CD8-positive, alpha-beta memory T cell (primary cell): ENCODE measurements at regions of chr12 and their contacts with region 1.

Region 1: DNA sequence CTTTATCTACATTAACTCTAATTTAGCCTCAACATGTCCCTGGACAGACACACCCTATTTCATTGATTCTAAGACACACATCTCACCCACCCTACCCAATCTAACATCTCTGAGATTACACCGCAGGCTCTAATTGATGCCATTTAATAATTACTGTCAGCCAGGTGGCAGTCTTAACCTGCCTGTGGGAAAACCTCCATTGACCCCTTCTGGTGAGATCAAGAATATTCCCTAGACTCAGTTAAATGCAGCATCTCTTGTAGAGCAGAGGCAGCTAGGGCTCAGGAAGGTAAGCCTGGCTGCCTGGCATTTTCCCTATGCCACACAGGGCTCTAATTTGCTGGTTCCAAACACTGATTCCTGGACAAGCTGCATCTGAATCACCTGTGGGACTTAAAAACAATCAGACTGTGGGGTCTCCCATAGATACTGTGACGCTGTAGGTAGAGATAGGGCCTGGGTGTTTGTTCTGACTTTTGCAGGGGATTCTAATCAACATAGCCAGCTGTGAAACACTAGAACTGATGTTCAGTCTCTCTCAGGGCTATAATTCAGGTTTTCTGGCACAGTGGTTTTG is 14.3 kb downstream of the MCRS1 start:
- DNase-seq: peak in 2 of 5 donors; percentile 31 to 46
- H3K4me3 ChIP-seq: no peak overlapping the region
- H3K4me3 Mint-ChIP-seq: peak overlapping the region in 1 of 7 donors; percentile 4
- H3K27ac ChIP-seq: no peak overlapping the region
- H3K27ac Mint-ChIP-seq: peak overlapping the region in 3 of 8 donors; percentile 20 to 81 (median 71)
- H3K4me1 ChIP-seq: peaks cover 5% of the 10 kb centered on the region
- H3K4me1 Mint-ChIP-seq: peaks cover 4 to 11% (median 6%) of the 10 kb centered on the region in 3 donors
- H3K27me3 ChIP-seq: peaks cover 2% of the 10 kb centered on the region
- H3K27me3 Mint-ChIP-seq: peaks cover 3% of the 10 kb centered on the region in 2 donors

Region 2: GRCh38 chr12:49564686-49565405 is 11.2 kb after region 1 on chr12:
- CTCF ChIA-PET with region 1: interaction called, 12 read pairs
- POLR2A ChIA-PET with region 1: interaction called, 4 read pairs
- DNase-seq: no peak
- H3K4me3 ChIP-seq: no peak overlapping the region
- H3K4me3 Mint-ChIP-seq: peak overlapping the region in 6 of 7 donors; percentile 28 to 99 (median 38)
- H3K27ac ChIP-seq: no peak overlapping the region
- H3K27ac Mint-ChIP-seq: peak overlapping the region in 6 of 8 donors; percentile 17 to 92 (median 46)
- H3K4me1 ChIP-seq: peaks cover 42% of the 10 kb centered on the region
- H3K4me1 Mint-ChIP-seq: peaks cover 49 to 60% (median 53%) of the 10 kb centered on the region in 3 donors
- H3K27me3 ChIP-seq: no peaks in the 10 kb centered on the region
- H3K27me3 Mint-ChIP-seq: no peaks in the 10 kb centered on the region

Region 3: DNA sequence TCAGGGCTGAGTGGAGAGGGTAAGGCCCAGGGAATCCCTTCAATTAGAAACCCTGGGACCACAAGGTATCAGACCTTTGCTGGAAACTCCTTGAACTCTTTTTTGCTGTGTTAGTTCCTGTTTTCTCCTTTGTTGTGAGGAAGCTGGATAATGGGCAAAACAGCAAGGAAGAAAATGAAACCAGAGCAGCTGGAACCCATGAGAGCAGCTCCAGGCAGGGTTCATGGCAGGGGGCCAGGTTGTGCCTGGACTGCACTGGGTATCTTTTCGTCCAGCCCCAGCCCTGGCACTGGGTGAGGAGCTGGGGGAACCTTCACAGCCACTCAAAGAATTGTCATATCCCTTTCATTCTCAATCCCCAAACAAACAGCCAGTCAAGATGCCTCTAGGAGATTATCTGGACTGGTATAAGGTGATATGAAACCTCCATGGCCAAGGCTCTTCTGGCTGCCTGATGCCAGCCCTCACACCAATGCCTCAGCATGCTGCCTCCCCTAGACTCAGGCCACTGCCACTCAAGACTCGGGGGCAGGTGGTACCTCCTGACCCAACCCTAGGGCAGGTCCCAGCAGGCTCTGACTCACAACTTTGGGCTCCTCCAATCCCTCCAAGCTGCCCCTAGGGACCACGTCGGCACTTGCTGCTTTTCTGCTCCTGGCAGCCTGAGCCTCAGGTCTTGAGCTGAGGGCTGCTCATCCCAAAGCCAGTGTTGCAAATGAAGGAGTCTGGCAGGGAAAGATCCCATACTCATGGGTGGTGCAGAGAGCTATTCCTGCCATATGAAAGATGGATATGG is 35.3 kb after region 1 on chr12:
- CTCF ChIA-PET with region 1: no interaction called
- POLR2A ChIA-PET with region 1: no interaction called
- DNase-seq: no peak
- H3K4me3 ChIP-seq: no peak overlapping the region
- H3K4me3 Mint-ChIP-seq: no peak overlapping the region
- H3K27ac ChIP-seq: no peak overlapping the region
- H3K27ac Mint-ChIP-seq: no peak overlapping the region
- H3K4me1 ChIP-seq: no peaks in the 10 kb centered on the region
- H3K4me1 Mint-ChIP-seq: peaks cover 0 to under 1% (median 0%) of the 10 kb centered on the region in 3 donors
- H3K27me3 ChIP-seq: no peaks in the 10 kb centered on the region
- H3K27me3 Mint-ChIP-seq: no peaks in the 10 kb centered on the region